ENCODE measurements at regions of chr9 and their contacts with region 1.

Region 1: GRCh38 chr9:6215562-6215961 is at the start of gene IL33:
- DNase-seq: no peak
- ATAC-seq: peak; percentile 80 to 86
- H3K4me3 ChIP-seq: peak within 1 kb of the TSS; percentile 77
- H3K27ac ChIP-seq: peak within 1 kb of the TSS; percentile 74
- H3K4me1 ChIP-seq: peaks cover 2% of the 10 kb centered on the region
- H3K27me3 ChIP-seq: no peaks in the 10 kb centered on the region
- total RNA-seq, gene IL33: 45.2 to 79.1 (median 57.0) TPM

Region 2: DNA sequence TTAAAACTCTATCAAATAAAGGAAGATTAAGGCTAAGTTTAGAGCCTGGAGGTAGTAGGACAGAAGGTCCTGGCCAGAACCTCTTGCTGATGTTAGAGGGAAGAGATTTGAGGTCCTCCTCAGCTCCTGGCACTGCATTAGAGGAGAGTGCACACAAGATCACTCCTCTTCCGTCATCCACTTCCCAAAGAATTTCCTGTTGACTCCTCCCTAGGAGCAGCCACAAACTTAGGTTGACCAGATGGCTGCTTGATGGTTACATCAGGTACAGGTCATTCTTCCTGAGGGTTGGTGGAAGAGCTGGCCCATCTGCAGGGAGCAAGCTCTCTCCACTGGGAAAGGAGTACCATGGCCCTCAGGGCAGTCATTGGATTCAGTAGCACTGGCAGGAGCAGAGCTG is 93.9 kb before region 1 on chr9:
- intact Hi-C with region 1: no loop called
- DNase-seq: no peak
- ATAC-seq: no peak
- H3K4me3 ChIP-seq: no peak overlapping the region
- H3K27ac ChIP-seq: no peak overlapping the region
- H3K4me1 ChIP-seq: no peaks in the 10 kb centered on the region
- H3K27me3 ChIP-seq: no peaks in the 10 kb centered on the region

Region 3: GRCh38 chr9:6272229-6272598 is 56.7 kb after region 1 on chr9:
- intact Hi-C with region 1: loop called in 1 of 4 experiments (anchors 10 kb)
- DNase-seq: no peak
- ATAC-seq: peak; percentile 97
- H3K4me3 ChIP-seq: no peak overlapping the region
- H3K27ac ChIP-seq: no peak overlapping the region
- H3K4me1 ChIP-seq: peaks cover 2% of the 10 kb centered on the region
- H3K27me3 ChIP-seq: no peaks in the 10 kb centered on the region

Region 4: DNA sequence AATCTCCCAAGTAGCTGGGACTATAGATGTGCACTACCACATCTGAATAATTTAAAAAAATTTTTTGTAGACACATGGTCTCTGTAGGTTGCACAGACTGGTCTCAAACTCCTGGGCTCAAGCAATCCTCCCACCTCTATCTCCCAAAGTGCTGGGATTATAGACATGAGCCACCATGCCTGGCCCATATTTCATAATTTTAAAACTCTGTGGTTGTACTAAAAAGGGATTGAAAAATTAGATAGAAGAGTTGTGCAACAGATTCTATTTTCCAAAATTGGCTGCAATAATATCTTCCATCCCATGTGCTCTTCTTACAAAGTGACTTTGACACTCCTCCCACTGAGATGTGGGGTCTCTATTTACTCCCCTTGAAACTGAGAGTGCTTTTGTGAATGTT is 189.8 kb after region 1 on chr9:
- intact Hi-C with region 1: no loop called
- DNase-seq: no peak
- ATAC-seq: no peak
- H3K4me3 ChIP-seq: no peak overlapping the region
- H3K27ac ChIP-seq: no peak overlapping the region
- H3K4me1 ChIP-seq: no peaks in the 10 kb centered on the region
- H3K27me3 ChIP-seq: no peaks in the 10 kb centered on the region

Measured in right cardiac atrium (tissue), 5 donors.